CD14-positive monocyte (primary cell): ENCODE measurements at regions of chr19 and their contacts with region 1.

Region 1: GRCh38 chr19:44954824-44955586 is at the start of gene CLPTM1:
- DNase-seq: peak; percentile 96 to 97 (median 97)
- H3K4me3 ChIP-seq: peak within 1 kb of the TSS; percentile 93 to 99 (median 94)
- H3K4me3 Mint-ChIP-seq: peak within 1 kb of the TSS; percentile 98 to 99
- H3K27ac ChIP-seq: peak within 1 kb of the TSS; percentile 89 to 93
- H3K27ac Mint-ChIP-seq: peak within 1 kb of the TSS; percentile 96 to 100 (median 100)
- H3K4me1 ChIP-seq: peaks cover 23 to 32% of the 10 kb centered on the region in 2 donors
- H3K4me1 Mint-ChIP-seq: peaks cover 35% of the 10 kb centered on the region
- H3K27me3 ChIP-seq: no peaks in the 10 kb centered on the region
- H3K27me3 Mint-ChIP-seq: peaks cover 0 to 2% (median 2%) of the 10 kb centered on the region in 3 donors
- CTCF ChIP-seq: no peak
- polyA plus RNA-seq, gene CLPTM1: 14.7 to 84.3 (median 20.0) TPM

Region 2: DNA sequence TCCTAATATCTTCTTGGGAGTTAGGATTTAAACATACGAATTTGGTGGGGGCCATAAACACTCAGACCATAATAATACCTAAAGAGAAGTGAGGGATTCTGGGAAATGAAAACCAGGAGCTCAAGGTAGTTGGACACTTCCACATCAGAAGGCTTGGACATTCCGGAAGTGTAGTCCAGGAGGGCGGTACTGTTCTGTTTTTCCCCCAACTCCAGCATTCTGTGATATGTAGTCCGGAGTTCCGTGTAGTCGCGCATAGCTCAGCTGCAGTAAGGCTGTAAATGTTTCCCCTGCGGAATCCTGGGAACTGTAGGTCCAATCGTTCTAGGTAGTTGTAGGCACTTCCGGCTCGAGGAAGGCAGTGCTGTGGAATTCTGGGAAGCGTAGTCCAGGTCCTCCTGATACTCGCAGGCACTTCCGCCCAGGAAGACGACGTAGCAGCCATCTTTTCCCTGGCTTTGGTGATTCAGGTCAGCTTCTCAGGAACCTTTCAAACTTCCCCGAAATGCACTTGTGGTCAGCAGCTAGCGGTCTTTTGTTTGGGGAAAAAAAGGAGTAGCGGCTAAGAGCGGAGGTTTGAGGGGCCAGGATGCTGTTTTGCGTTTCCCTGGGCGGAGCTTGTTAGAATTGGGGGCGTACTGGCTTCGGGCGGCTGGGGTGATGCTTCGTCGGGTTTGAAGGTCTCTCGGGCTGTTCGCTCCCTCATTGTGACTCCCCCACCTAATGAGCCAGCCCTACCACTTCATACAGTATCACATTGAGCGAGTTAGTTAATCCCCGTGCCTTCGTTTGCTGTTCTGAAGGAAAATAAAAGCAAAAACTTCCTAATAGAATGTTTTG is 790.1 kb before region 1 on chr19 and contains the start of gene ZNF226:
- intact Hi-C with region 1: no loop called
- DNase-seq: peak; percentile 89 to 96 (median 95)
- H3K4me3 ChIP-seq: peak within 1 kb of the TSS; percentile 66 to 91 (median 68)
- H3K4me3 Mint-ChIP-seq: peak within 1 kb of the TSS; percentile 98 to 99
- H3K27ac ChIP-seq: peak within 1 kb of the TSS; percentile 58 to 86
- H3K27ac Mint-ChIP-seq: peak within 1 kb of the TSS; percentile 88 to 97 (median 96)
- H3K4me1 ChIP-seq: peaks cover 11 to 16% of the 10 kb centered on the region in 2 donors
- H3K4me1 Mint-ChIP-seq: peaks cover 18% of the 10 kb centered on the region
- H3K27me3 ChIP-seq: no peaks in the 10 kb centered on the region
- H3K27me3 Mint-ChIP-seq: peaks cover 1 to 10% (median 7%) of the 10 kb centered on the region in 3 donors
- CTCF ChIP-seq: no peak
- polyA plus RNA-seq, gene ZNF226: 9.3 to 16.6 (median 16.3) TPM

Region 3: GRCh38 chr19:44890366-44891015 is 64.5 kb before region 1 on chr19:
- intact Hi-C with region 1: loop called in 1 of 2 experiments (anchors 1 kb)
- DNase-seq: peak; percentile 96 to 100 (median 100)
- H3K4me3 ChIP-seq: peak overlapping the region; percentile 61 to 78 (median 68)
- H3K4me3 Mint-ChIP-seq: peak overlapping the region; percentile 83 to 95
- H3K27ac ChIP-seq: peak overlapping the region; percentile 97 to 99
- H3K27ac Mint-ChIP-seq: peak overlapping the region; percentile 90 to 98 (median 96)
- H3K4me1 ChIP-seq: peaks cover 20 to 25% of the 10 kb centered on the region in 2 donors
- H3K4me1 Mint-ChIP-seq: peaks cover 23% of the 10 kb centered on the region
- H3K27me3 ChIP-seq: no peaks in the 10 kb centered on the region
- H3K27me3 Mint-ChIP-seq: peaks cover 0 to 2% (median 1%) of the 10 kb centered on the region in 3 donors
- CTCF ChIP-seq: no peak

Region 4: GRCh38 chr19:44903602-44904425 is 51.2 kb before region 1 on chr19:
- intact Hi-C with region 1: loop called (anchors 1 to 2 kb)
- DNase-seq: peak; percentile 43 to 59 (median 44)
- H3K4me3 ChIP-seq: no peak overlapping the region
- H3K4me3 Mint-ChIP-seq: peak overlapping the region in 1 of 2 donors; percentile 11
- H3K27ac ChIP-seq: no peak overlapping the region
- H3K27ac Mint-ChIP-seq: no peak overlapping the region
- H3K4me1 ChIP-seq: peaks cover 0 to 11% of the 10 kb centered on the region in 2 donors
- H3K4me1 Mint-ChIP-seq: peaks cover 11% of the 10 kb centered on the region
- H3K27me3 ChIP-seq: peaks cover 5 to 26% of the 10 kb centered on the region in 2 donors
- H3K27me3 Mint-ChIP-seq: peaks cover 27 to 36% (median 30%) of the 10 kb centered on the region in 3 donors
- CTCF ChIP-seq: peak; percentile 99

Region 5: DNA sequence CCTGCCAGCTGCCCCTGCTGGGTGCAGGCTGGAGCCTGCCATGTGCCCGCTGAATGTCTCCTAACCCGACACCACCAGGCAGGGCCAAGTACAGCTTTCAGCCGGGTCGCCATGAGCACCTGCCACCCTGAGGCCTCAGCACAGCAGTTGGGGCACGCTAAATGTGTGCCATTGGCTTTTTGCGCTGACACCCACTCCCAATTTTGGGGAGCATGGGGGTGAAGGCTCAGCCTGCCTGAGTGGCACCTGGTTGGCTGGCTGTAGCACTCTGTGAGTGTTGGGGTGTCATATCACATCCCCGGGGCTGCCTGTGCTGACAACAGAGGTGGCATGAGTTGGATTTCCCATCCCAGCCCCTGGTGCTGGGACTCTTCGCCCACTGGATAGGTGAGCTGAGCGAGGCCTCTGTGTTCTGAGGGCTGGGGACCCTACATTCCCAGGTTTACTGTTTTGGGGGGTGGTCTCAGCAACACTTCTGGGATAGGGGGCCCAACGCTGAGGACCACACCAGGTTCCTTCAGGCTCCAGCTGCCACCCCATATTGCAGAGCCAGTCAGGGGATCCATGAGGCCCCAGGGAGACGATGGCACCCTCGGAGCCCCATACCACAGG is 39.0 kb after region 1 on chr19:
- intact Hi-C with region 1: loop called in 1 of 2 experiments (anchors 5 kb)
- DNase-seq: no peak
- H3K4me3 ChIP-seq: no peak overlapping the region
- H3K4me3 Mint-ChIP-seq: no peak overlapping the region
- H3K27ac ChIP-seq: no peak overlapping the region
- H3K27ac Mint-ChIP-seq: peak overlapping the region in 4 of 7 donors; percentile 27 to 64 (median 50)
- H3K4me1 ChIP-seq: no peaks in the 10 kb centered on the region
- H3K4me1 Mint-ChIP-seq: no peaks in the 10 kb centered on the region
- H3K27me3 ChIP-seq: no peaks in the 10 kb centered on the region
- H3K27me3 Mint-ChIP-seq: peaks cover 0 to 1% (median 0%) of the 10 kb centered on the region in 3 donors
- CTCF ChIP-seq: no peak